GM12878 (cell line): ENCODE measurements at regions of chr9 and their contacts with region 1.

Region 1: DNA sequence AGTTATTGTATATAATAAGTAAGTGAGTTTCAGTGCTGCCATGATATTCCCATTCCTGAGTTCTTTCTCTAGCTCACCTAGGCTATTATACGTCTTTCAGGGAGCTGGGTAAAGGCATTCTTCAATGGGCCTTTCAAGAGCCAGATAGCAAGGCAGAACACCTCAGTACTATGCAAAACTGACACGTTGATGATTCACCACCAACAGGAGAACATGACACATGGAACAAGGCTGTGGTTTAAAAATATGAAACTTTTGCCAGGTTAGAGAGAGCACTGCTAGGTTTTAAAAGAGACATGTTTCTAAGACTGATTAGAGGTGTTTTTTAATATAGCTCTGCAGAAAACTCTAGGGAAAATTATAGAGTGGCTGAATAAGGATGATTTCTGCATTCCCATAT is 95.9 kb downstream of the UGCG start:
- DNase-seq: peak; percentile 77
- ATAC-seq: peak; percentile 86
- H3K4me3 ChIP-seq: no peak overlapping the region
- H3K27ac ChIP-seq: peak overlapping the region; percentile 89
- H3K4me1 ChIP-seq: peaks cover 54% of the 10 kb centered on the region
- H3K27me3 ChIP-seq: no peaks in the 10 kb centered on the region
- CTCF ChIP-seq: no peak
- EP300 ChIP-seq: peak; percentile 43 to 69; a peak in 3 of 4 replicates
- POLR2A ChIP-seq: no peak
- RAD21 ChIP-seq: no peak

Region 2: DNA sequence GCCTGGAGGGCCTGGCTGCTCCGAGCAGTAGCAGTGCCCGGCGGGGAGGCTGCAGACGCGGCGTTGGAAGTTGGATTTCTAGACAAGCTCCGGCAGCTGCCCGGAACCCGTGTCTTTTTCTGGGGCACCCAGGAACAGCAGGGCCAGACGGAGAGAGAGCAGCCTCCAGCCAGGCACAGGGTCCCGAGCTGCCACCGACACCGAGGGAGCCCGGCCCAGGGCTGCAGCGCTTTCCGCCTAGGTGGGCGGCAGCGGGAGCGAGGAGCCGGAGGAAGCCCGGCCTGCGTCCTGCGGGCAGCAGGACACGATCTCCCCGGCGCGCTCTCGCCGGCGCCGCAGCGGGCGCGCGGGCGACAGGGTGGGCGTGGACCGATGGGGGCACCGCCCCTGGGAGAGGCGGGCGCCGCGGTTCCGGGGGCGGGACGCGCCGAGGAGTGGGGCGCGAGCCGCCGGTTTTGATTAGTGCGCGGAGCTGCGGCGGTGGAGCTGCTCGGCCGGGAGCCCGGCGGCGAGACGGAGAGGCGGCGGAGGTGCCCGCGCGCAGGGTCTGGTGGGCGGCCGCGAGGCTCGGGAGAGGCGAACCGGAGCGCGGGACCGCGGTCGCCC is 96.1 kb before region 1 on chr9 and contains the start of gene UGCG:
- CTCF ChIA-PET with region 1: interaction called, 13 read pairs
- POLR2A ChIA-PET with region 1: interaction called, 3 read pairs
- RAD21 ChIA-PET with region 1: interaction called, 23 read pairs
- SMC1A ChIA-PET with region 1: interaction called, 8 read pairs
- in situ Hi-C with region 1: no loop called
- intact Hi-C with region 1: no loop called
- DNase-seq: no peak
- ATAC-seq: peak; percentile 79
- H3K4me3 ChIP-seq: peak within 1 kb of the TSS; percentile 80
- H3K27ac ChIP-seq: peak within 1 kb of the TSS; percentile 93
- H3K4me1 ChIP-seq: no peaks in the 10 kb centered on the region; the same call in 1 of the 2 replicates
- H3K27me3 ChIP-seq: no peaks in the 10 kb centered on the region
- CTCF ChIP-seq: no peak
- EP300 ChIP-seq: 0 out of 4 replicates have a peak, but pooled peaks of 1 of the 2 experiments have one; percentile 14
- POLR2A ChIP-seq: peak; percentile 93
- RAD21 ChIP-seq: 0 out of 2 replicates have a peak, but pooled peaks have one; percentile 2
- polyA plus RNA-seq, gene UGCG: 48.0 to 62.1 TPM

Region 3: DNA sequence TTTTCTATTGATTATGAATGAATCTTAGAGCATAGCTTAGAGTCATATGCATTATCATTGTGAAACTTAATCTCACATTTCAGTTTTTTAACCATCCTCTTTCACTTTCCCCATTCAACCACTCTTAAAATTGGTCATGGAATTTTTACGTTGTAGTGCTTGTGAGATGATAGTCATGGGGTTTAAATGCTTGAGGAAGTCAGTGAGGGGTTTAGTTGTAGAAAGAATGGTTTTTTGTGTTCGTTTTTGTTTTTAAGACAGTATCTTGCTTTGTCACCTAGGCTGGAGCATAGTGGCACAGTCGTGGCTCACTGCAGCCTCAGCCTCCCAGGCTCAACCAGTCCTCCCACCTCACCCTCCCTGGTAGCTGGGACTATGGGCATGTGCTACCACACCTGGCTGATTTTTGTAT is 76.3 kb before region 1 on chr9:
- CTCF ChIA-PET with region 1: no interaction called
- POLR2A ChIA-PET with region 1: interaction called, 4 read pairs
- RAD21 ChIA-PET with region 1: interaction called, 10 read pairs
- SMC1A ChIA-PET with region 1: interaction called, 24 read pairs
- in situ Hi-C with region 1: no loop called
- intact Hi-C with region 1: no loop called
- DNase-seq: no peak
- ATAC-seq: peak; percentile 67
- H3K4me3 ChIP-seq: peak overlapping the region; percentile 54; the same call in 1 of the 2 replicates
- H3K27ac ChIP-seq: peak overlapping the region; percentile 76
- H3K4me1 ChIP-seq: peaks cover 47% of the 10 kb centered on the region
- H3K27me3 ChIP-seq: no peaks in the 10 kb centered on the region
- CTCF ChIP-seq: no peak
- EP300 ChIP-seq: peak; percentile 42 to 60; a peak in 3 of 4 replicates
- POLR2A ChIP-seq: no peak
- RAD21 ChIP-seq: no peak

Region 4: GRCh38 chr9:111945216-111945615 is 47.3 kb before region 1 on chr9:
- CTCF ChIA-PET with region 1: interaction called, 3 read pairs
- POLR2A ChIA-PET with region 1: no interaction called
- RAD21 ChIA-PET with region 1: interaction called, 12 read pairs
- SMC1A ChIA-PET with region 1: interaction called, 8 read pairs
- in situ Hi-C with region 1: no loop called
- intact Hi-C with region 1: no loop called
- DNase-seq: peak; percentile 65
- ATAC-seq: peak; percentile 87
- H3K4me3 ChIP-seq: no peak overlapping the region
- H3K27ac ChIP-seq: peak overlapping the region; percentile 47
- H3K4me1 ChIP-seq: peaks cover 34% of the 10 kb centered on the region
- H3K27me3 ChIP-seq: no peaks in the 10 kb centered on the region
- CTCF ChIP-seq: no peak
- EP300 ChIP-seq: peak; percentile 60 to 75; a peak in 2 of 4 replicates
- POLR2A ChIP-seq: no peak
- RAD21 ChIP-seq: no peak

Region 5: DNA sequence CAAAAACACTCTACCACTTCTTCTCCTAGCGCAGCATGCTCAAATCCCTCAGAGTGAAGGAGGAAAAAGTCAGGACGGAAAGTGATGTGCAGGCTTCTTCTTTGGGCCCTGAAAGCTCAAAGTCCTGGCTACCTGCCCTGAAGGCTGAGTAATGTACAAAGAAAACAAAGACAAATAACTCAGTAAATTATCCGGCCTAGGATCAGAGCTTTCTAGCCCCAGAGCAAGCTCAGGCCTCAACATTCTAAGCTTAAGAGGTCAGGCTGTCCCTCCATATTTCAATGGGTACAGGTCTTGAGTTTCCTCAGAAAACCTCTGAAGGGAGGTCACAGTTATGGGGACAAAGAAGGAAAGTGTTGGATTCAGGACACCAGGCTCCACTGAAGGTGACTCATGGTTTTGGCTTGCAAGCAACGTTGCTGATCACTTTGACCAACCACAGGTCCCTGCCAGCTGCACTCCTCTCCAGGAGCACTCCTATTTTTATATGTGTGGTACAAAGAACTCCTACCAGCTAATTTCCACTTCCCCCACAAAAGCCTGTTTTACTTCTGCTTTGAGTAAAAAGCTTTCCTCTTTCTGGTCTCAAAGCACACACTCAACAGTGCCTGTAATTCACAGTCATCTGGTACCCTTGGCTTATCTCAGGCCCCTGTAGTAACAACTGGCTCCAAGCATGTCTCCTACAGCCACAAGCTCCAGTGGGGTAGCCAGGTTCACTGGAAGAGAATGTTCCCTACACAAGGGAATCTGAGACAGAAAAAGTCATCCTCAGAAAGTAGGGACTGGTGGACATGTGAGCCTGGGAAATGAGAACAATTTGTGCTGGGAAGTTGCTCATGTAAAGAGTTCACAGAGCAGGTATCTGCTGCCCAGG is 19.7 kb after region 1 on chr9:
- CTCF ChIA-PET with region 1: interaction called, 15 read pairs
- POLR2A ChIA-PET with region 1: interaction called, 77 read pairs
- RAD21 ChIA-PET with region 1: interaction called, 85 read pairs
- SMC1A ChIA-PET with region 1: interaction called, 311 read pairs
- in situ Hi-C with region 1: no loop called
- intact Hi-C with region 1: loop called (anchors 1 kb)
- DNase-seq: peak; percentile 96
- ATAC-seq: peak; percentile 92
- H3K4me3 ChIP-seq: no peak overlapping the region
- H3K27ac ChIP-seq: peak overlapping the region; percentile 92
- H3K4me1 ChIP-seq: peaks cover 52% of the 10 kb centered on the region
- H3K27me3 ChIP-seq: no peaks in the 10 kb centered on the region
- CTCF ChIP-seq: no peak
- EP300 ChIP-seq: peak; percentile 96 to 97
- POLR2A ChIP-seq: peak; percentile 43; the same call in 1 of the 2 replicates
- RAD21 ChIP-seq: peak; percentile 35

Region 6: GRCh38 chr9:112037281-112038016 is 44.9 kb after region 1 on chr9:
- CTCF ChIA-PET with region 1: interaction called, 13 read pairs
- POLR2A ChIA-PET with region 1: interaction called, 158 read pairs
- RAD21 ChIA-PET with region 1: interaction called, 174 read pairs
- SMC1A ChIA-PET with region 1: interaction called, 313 read pairs
- in situ Hi-C with region 1: no loop called
- intact Hi-C with region 1: no loop called
- DNase-seq: peak; percentile 97
- ATAC-seq: peak; percentile 71
- H3K4me3 ChIP-seq: no peak overlapping the region
- H3K27ac ChIP-seq: peak overlapping the region; percentile 97
- H3K4me1 ChIP-seq: peaks cover 63% of the 10 kb centered on the region
- H3K27me3 ChIP-seq: no peaks in the 10 kb centered on the region
- CTCF ChIP-seq: no peak
- EP300 ChIP-seq: peak; percentile 74 to 78; a peak in 3 of 4 replicates
- POLR2A ChIP-seq: peak; percentile 69
- RAD21 ChIP-seq: peak; percentile 44; the same call in 1 of the 2 replicates